Panc1 (cell line): ENCODE measurements at regions of chr7 and their contacts with region 1.

Region 1: GRCh38 chr7:6306471-6306870 is 34.0 kb upstream of the CYTH3 start:
- DNase-seq: peak; percentile 90
- ATAC-seq: peak; percentile 93
- H3K4me3 ChIP-seq: no peak overlapping the region
- H3K27ac ChIP-seq: no peak overlapping the region
- H3K4me1 ChIP-seq: peaks cover 8% of the 10 kb centered on the region
- H3K27me3 ChIP-seq: no peaks in the 10 kb centered on the region
- CTCF ChIP-seq: no peak

Region 2: GRCh38 chr7:5838761-5839500 is 467.5 kb before region 1 on chr7:
- CTCF ChIA-PET with region 1: interaction called, 10 read pairs
- POLR2A ChIA-PET with region 1: no interaction called
- in situ Hi-C with region 1: no loop called
- intact Hi-C with region 1: no loop called
- DNase-seq: no peak
- ATAC-seq: no peak
- H3K4me3 ChIP-seq: no peak overlapping the region
- H3K27ac ChIP-seq: no peak overlapping the region
- H3K4me1 ChIP-seq: no peaks in the 10 kb centered on the region
- H3K27me3 ChIP-seq: no peaks in the 10 kb centered on the region
- CTCF ChIP-seq: no peak